ENCODE measurements at regions of chr6 and their contacts with region 1.

Region 1: DNA sequence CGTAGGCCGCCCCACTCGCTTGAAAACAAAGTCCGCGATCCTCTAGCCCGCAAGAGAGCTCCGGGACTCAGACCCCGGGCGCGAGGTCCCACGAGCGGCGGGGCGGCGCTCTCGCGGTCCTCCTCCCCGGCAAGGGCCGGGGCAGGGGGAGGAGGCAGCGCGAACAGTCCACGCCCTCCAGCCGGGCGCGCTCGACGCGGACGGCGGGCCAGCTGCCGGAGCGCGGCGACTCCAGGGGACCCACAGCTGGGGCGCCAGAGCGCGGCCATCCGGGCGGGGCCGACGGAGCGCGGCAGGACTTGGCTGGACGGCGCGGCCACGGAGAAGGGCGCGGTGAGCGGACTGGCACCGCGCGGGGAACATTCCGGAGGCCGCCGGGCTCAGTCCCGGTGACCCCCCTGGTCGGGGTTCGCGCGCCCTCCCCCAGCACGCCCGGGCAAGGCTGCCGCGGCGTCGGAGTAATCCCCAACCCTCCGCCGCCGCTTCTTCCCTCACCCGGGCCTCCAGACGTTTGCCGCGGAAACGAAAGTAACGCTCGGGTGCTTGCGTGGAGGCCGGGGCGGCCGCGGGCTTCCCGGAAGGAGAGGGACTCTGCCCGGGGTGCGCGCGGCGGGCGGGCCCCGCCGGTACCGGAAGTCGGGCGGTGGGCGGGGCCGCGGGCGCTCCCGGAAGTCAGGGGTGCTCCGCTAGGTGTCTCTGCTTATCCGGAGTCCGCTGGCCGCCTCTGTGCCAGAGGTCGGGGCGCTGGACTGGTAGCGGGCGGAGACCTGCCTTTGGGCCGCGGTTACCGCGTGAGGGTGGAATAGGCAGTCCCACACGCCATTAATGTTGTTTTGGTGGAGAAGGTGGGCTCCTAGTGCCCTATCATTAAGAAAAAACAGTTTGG is at the start of gene RIPK1:
- DNase-seq: peak; percentile 95
- H3K4me3 Mint-ChIP-seq: peak within 1 kb of the TSS; percentile 95
- H3K27ac Mint-ChIP-seq: peak within 1 kb of the TSS; percentile 95
- H3K4me1 Mint-ChIP-seq: peaks cover 55% of the 10 kb centered on the region
- H3K27me3 Mint-ChIP-seq: no peaks in the 10 kb centered on the region
- total RNA-seq, gene RIPK1: 18.3 and 19.0 TPM in 2 replicates

Region 2: DNA sequence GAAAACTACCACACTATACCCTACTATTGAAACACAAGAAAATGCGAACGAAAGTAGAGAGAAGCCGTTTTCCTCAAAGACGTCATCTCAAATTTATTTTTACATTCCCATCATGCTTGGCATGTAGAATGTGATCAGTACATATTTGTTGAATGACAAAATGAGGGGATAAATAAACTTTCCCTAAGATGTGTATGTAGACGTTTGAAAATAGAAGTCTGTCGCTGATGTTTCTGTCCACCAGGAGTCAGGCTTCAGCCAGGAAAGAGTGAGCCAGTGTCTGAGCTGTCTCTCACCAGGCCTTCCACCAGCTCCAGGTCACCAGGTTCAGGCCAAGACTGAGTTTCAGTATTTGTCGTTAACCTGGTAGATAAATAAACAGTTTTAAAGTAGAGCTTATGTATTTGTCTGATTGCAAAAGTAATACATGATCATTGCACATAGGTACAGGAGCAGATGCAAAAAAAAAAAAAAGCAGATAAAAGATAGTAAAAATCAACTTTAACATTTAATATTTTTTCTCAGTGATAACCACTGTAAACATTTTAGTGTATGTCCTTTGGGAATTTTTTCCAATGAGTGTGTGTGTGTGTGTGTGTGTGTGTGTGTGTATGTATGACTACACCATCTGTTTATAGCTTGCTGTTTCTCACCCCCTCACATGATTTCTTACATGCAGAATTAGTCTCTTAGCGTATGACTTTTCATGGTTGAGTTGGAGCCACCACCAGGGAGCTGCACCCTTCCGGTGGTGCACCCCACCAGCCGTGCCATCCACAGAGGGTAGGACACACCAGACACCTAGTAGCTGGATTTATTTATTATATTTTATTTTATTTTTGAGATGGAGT is 277.2 kb before region 1 on chr6:
- intact Hi-C with region 1: loop called (anchors 5 kb)
- DNase-seq: peak; percentile 55
- H3K4me3 Mint-ChIP-seq: peak overlapping the region; percentile 41
- H3K27ac Mint-ChIP-seq: peak overlapping the region; percentile 87
- H3K4me1 Mint-ChIP-seq: peaks cover 44% of the 10 kb centered on the region
- H3K27me3 Mint-ChIP-seq: no peaks in the 10 kb centered on the region

Region 3: DNA sequence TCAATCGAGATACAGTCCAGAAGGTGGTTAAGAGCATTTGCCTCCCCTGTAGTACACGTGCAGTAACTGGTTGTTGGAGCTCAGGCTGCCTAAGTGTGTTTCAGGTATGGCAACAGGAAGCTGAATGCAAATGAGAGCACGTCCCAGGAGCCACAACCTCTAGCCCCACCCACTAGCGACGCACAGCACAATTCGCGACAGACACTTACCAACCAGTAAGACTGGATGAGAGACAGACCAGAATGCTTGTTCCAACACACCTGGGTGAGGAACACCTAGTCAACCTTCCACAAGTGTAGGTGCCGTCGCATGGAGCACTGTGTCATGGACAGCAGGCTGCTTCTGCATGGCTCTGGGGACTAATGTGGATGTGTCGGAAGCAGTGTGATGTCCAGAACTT is 219.7 kb before region 1 on chr6:
- intact Hi-C with region 1: loop called (anchors 5 kb)
- DNase-seq: peak; percentile 64
- H3K4me3 Mint-ChIP-seq: peak overlapping the region; percentile 51
- H3K27ac Mint-ChIP-seq: peak overlapping the region; percentile 73
- H3K4me1 Mint-ChIP-seq: peaks cover 50% of the 10 kb centered on the region
- H3K27me3 Mint-ChIP-seq: no peaks in the 10 kb centered on the region

Region 4: DNA sequence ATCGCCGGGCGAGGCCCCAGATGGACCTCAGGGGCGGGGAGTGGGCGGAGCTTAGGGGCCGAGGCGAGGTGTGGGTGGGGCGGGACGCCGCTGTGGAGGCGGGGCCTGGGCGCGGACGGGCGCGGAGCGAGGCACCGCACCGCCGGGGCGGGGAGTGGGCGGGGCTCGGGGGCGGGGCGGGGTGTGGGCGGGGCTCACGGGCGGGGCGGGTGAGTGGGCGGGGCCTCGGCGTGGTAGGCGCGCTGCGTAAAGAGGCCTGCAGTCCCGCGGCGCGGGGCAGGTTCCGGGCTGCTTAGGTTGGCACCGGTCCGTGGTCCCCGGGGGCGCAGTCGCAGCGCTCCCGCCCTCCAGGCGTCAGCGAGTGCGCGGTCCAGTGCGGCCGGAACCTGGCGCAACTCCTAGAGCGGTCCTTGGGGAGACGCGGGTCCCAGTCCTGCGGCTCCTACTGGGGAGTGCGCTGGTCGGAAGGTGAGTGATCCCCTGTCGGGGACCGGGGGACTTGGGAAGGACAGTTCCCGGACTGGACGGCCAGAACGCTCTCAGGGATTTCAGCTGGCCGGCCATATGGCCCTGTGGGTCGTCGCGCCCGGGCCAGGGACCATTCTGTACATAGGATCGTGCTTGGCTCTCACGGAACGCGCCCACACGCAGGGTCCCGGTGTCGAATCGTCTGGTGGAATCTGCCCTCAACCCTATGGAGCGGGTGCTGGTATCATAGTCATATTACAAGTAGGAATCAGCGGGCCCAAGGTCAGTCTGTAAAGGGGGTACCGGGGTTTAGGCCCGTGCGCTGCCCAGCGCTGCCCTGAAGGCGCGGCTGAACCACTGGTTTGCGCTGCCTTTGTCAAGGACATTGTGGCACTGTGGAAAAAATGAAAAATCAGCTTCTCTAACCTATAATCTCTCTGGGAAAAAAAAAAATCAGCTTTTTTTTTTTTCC is 68.7 kb before region 1 on chr6 and contains the start of gene NQO2:
- intact Hi-C with region 1: loop called (anchors 1 kb)
- DNase-seq: peak; percentile 86
- H3K4me3 Mint-ChIP-seq: peak within 1 kb of the TSS; percentile 90
- H3K27ac Mint-ChIP-seq: peak within 1 kb of the TSS; percentile 91
- H3K4me1 Mint-ChIP-seq: peaks cover 24% of the 10 kb centered on the region
- H3K27me3 Mint-ChIP-seq: no peaks in the 10 kb centered on the region
- total RNA-seq, gene NQO2: 42.5 and 45.6 TPM in 2 replicates

Region 5: DNA sequence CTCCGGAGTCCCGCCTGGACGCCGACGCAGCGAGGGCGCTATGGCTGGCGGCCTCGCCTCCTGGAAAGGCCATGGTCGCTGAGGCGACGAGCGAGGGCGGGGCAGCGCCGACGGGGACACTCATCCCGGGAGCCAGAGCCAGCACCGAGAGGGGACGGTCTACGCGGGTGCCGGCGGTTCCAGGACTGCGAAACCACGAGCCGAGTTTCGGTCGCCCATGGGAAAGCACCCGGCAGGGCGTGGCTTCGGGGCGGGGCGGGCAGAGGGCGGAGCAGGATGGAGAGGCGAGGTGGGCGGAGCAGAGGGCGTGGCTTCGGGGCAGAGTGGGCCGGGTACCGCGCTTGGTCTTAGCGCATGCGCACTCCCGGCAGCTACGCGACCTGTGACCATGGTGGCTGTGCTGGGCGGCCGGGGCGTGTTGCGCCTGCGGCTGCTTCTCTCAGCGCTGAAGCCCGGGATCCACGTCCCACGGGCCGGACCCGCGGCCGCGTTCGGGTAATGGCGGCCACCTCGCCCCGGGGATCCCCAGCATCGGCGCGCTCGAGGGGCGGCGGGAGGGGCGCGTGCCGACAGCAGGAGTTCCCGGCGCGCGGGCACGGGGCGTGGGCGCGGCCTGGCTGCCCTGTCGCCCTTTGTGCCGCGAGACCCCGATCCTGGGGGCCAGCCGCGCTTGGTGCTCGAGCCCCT is 49.9 kb after region 1 on chr6 and contains the start of gene BPHL:
- intact Hi-C with region 1: loop called (anchors 1 kb)
- DNase-seq: peak; percentile 98
- H3K4me3 Mint-ChIP-seq: peak within 1 kb of the TSS; percentile 80
- H3K27ac Mint-ChIP-seq: peak within 1 kb of the TSS; percentile 81
- H3K4me1 Mint-ChIP-seq: peaks cover 16% of the 10 kb centered on the region
- H3K27me3 Mint-ChIP-seq: no peaks in the 10 kb centered on the region
- total RNA-seq, gene BPHL: 12.1 and 15.8 TPM in 2 replicates

Region 6: DNA sequence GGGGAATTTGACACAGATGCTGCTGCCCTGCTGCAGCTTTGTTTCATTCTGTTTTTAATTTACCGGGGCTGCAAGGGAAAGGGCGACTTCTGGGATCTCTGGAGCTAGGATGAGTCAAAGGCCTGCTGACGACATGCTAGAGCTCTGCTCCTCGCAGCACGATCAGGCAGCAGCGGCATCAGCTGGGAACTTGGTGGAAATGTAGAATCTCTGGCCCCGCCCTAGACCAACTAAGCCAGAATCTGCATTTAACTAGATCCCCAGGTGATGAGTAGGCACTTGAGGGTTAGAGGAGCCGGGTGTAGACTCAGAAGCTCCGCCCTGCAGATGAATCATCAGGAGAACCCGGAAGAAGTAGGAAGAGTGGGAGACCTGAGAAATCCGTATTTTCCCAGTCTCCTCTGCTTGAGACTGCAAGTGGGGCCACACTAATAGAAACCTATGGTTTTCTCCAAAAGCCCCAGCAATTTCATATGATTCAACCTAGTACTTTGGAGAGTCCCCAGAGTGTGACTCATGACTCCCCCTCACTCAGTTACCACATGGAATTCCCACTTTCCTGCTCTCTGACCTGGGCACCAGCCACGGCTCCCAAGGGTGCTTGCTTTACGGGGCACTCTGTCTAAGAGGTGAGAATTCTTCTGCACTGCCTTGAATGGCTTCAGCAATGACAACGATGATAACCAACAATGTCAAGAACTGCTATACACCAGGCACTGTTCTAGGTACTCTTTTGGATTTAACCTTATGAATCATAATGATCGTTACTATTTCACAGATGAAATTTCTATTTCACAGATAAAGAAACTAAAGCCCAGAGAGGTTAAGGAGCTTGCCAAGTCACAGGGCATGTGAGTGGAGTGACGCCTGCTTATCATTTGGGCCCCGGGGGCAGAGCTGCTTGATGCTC is 140.8 kb after region 1 on chr6:
- intact Hi-C with region 1: loop called (anchors 1 kb)
- DNase-seq: no peak
- H3K4me3 Mint-ChIP-seq: peak overlapping the region; percentile 60
- H3K27ac Mint-ChIP-seq: peak overlapping the region; percentile 89
- H3K4me1 Mint-ChIP-seq: peaks cover 26% of the 10 kb centered on the region
- H3K27me3 Mint-ChIP-seq: peaks cover 29% of the 10 kb centered on the region

Region 7: DNA sequence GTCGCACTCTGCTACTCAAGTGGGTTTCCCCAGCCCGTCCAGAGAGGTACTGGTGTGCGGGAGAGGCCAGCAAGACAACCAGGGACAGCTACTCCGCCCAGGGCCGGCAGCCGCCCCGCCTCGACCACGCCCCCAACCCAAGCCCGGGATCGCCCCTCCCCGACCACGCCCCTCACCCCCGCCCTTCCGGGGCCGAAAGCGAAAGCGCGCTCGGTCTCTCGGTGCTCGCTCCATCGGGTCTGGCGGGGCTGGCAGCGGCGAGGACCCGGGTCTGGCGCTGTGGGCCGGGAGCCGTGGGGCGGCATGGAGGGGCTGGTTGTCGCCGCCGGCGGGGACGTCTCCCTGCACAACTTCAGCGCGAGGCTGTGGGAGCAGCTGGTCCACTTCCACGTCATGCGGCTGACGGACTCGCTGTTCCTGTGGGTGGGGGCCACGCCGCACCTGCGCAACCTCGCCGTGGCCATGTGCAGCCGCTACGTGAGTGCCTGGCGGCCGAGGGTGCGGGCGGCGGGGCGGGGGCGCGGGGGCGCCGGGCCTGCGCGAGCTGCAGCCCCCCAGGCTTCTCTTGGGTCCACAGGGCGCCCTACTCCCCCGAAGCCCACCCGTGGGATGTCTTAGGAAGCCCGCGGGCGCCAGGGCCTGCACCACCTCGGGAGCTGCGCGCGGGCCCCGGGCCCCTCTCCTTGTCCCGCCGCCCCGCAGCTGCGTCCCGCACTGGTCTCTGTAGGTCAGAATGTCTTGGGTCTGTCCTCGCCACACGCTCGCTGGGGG is 190.3 kb after region 1 on chr6 and contains the start of gene PSMG4:
- intact Hi-C with region 1: loop called (anchors 2 kb)
- DNase-seq: peak; percentile 90
- H3K4me3 Mint-ChIP-seq: peak within 1 kb of the TSS; percentile 98
- H3K27ac Mint-ChIP-seq: peak within 1 kb of the TSS; percentile 88
- H3K4me1 Mint-ChIP-seq: peaks cover 25% of the 10 kb centered on the region
- H3K27me3 Mint-ChIP-seq: peaks cover 17% of the 10 kb centered on the region
- total RNA-seq, gene PSMG4: 26.4 and 30.9 TPM in 2 replicates

Measured in activated T-helper 2 cell treated with anti-CD3 and anti-CD28 coated beads, Interferon-gamma antibody, Interleukin-2, Interleukin-4, amounts not matched to agents 10 μg/mL and 5 μg/mL and 100 μg/mL, durations not matched to agents 14 hours and 24 hours and 36 hours (primary cell).